IMR-90 (cell line): ENCODE measurements at regions of chr5 and their contacts with region 1.

Region 1: GRCh38 chr5:84343171-84343570 is 41.5 kb downstream of the EDIL3 start:
- DNase-seq: no peak
- ATAC-seq: no peak
- H3K4me3 ChIP-seq: no peak overlapping the region
- H3K27ac ChIP-seq: no peak overlapping the region
- H3K4me1 ChIP-seq: peaks cover 3% of the 10 kb centered on the region; the same call in 1 of the 2 replicates
- H3K27me3 ChIP-seq: no peaks in the 10 kb centered on the region
- CTCF ChIP-seq: no peak
- POLR2A ChIP-seq: no peak
- RAD21 ChIP-seq: no peak

Region 2: GRCh38 chr5:84362061-84362720 is 19.0 kb after region 1 on chr5:
- CTCF ChIA-PET with region 1: no interaction called
- POLR2A ChIA-PET with region 1: interaction called, 20 read pairs
- dilution Hi-C with region 1: no loop called
- in situ Hi-C with region 1: no loop called
- intact Hi-C with region 1: no loop called
- DNase-seq: no peak
- ATAC-seq: peak; percentile 44; the same call in 1 of the 2 replicates
- H3K4me3 ChIP-seq: no peak overlapping the region
- H3K27ac ChIP-seq: no peak overlapping the region
- H3K4me1 ChIP-seq: no peaks in the 10 kb centered on the region
- H3K27me3 ChIP-seq: no peaks in the 10 kb centered on the region
- CTCF ChIP-seq: no peak
- POLR2A ChIP-seq: no peak
- RAD21 ChIP-seq: no peak

Region 3: GRCh38 chr5:84830265-84830664 is 487.1 kb after region 1 on chr5:
- CTCF ChIA-PET with region 1: no interaction called
- POLR2A ChIA-PET with region 1: no interaction called
- dilution Hi-C with region 1: no loop called
- in situ Hi-C with region 1: no loop called
- intact Hi-C with region 1: no loop called
- DNase-seq: no peak
- ATAC-seq: no peak
- H3K4me3 ChIP-seq: no peak overlapping the region
- H3K27ac ChIP-seq: no peak overlapping the region
- H3K4me1 ChIP-seq: no peaks in the 10 kb centered on the region
- H3K27me3 ChIP-seq: no peaks in the 10 kb centered on the region
- CTCF ChIP-seq: no peak
- POLR2A ChIP-seq: no peak
- RAD21 ChIP-seq: no peak